ENCODE measurements at regions of chr7 and their contacts with region 1.

Region 1: GRCh38 chr7:121057878-121058277 is 69.4 kb downstream of the CPED1 start:
- DNase-seq: no peak
- H3K4me3 Mint-ChIP-seq: no peak overlapping the region
- H3K27ac Mint-ChIP-seq: no peak overlapping the region
- H3K4me1 Mint-ChIP-seq: no peaks in the 10 kb centered on the region
- H3K27me3 Mint-ChIP-seq: peaks cover 9% of the 10 kb centered on the region

Region 2: GRCh38 chr7:120916121-120916520 is 141.8 kb before region 1 on chr7:
- intact Hi-C with region 1: no loop called
- DNase-seq: no peak
- H3K4me3 Mint-ChIP-seq: no peak overlapping the region
- H3K27ac Mint-ChIP-seq: no peak overlapping the region
- H3K4me1 Mint-ChIP-seq: no peaks in the 10 kb centered on the region
- H3K27me3 Mint-ChIP-seq: peaks cover 2% of the 10 kb centered on the region

Region 3: GRCh38 chr7:121069346-121070100 is 11.6 kb after region 1 on chr7:
- intact Hi-C with region 1: loop called (anchors 2 kb)
- DNase-seq: no peak
- H3K4me3 Mint-ChIP-seq: no peak overlapping the region
- H3K27ac Mint-ChIP-seq: no peak overlapping the region
- H3K4me1 Mint-ChIP-seq: no peaks in the 10 kb centered on the region
- H3K27me3 Mint-ChIP-seq: peaks cover 18% of the 10 kb centered on the region

Measured in activated T-helper 2 cell treated with anti-CD3 and anti-CD28 coated beads, Interferon-gamma antibody, Interleukin-2, Interleukin-4, amounts not matched to agents 10 μg/mL and 5 μg/mL and 100 μg/mL, durations not matched to agents 14 hours and 24 hours and 36 hours (primary cell).